OCI-LY7 (cell line): ENCODE measurements at regions of chr1 and their contacts with region 1.

Region 1: DNA sequence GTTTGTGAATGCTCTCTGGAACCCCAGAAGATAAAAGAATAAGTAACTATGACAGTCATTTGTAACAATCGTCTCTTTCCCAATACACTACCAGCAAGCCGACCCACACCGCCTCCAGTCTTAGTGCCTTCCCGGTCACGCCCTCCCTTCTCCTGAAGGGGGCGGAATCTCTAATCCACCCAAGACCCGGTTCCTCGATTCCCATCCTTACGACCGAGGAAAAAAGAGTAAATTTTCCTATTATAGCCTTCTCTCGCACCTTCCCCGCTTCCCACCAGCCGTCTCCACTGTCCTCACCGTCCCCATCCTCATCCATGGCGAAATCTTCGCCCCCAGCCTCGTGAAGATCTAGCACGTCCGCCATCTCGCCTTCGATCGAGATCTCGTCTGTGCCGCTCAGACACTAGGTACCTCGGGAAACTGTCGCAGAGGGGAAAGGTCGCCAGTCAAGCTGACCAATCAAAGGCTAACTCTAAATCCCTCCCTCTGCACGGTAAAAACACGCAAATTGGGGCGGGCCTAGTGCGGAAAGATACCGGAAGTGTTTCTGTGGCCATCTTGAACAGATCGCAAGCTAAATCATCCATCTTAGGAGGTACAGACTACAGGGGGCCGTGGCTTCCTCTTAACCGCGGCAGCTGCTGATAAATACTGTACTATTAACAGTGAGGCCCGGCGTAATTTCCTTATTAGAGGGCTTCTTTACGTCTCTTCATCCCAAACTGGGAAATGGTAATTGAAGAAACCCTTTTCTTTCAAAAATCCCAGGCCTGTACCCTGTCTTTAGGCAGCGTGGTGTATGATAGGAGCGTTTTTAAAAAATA is at the start of gene RBM8A:
- DNase-seq: peak; percentile 99
- H3K4me3 ChIP-seq: peak within 1 kb of the TSS; percentile 92
- H3K27ac ChIP-seq: peak within 1 kb of the TSS; percentile 91
- H3K4me1 ChIP-seq: peaks cover 25% of the 10 kb centered on the region
- CTCF ChIP-seq: peak; percentile 88
- total RNA-seq, gene RBM8A: 135 and 239 TPM in 2 replicates

Region 2: DNA sequence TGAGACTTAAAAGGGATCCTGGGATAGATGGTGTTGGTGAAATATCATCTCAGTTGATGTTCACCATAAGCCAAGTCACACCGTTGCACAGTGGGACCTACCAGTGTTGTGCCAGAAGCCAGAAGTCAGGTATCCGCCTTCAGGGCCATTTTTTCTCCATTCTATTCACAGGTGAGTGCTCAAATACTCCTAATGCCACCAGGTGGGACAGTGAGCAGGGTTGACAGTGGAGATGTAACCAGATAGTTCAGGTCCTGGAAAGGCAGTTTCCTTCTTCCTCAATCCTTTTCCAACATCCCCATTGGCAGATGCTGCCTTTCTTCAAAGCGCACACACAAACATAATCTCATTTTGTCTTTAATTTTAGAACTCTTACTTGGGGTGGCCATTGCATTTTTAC is 196.4 kb before region 1 on chr1:
- CTCF ChIA-PET with region 1: no interaction called
- POLR2A ChIA-PET with region 1: no interaction called
- intact Hi-C with region 1: no loop called
- DNase-seq: no peak
- H3K4me3 ChIP-seq: no peak overlapping the region
- H3K27ac ChIP-seq: no peak overlapping the region
- H3K4me1 ChIP-seq: no peaks in the 10 kb centered on the region
- CTCF ChIP-seq: no peak

Region 3: DNA sequence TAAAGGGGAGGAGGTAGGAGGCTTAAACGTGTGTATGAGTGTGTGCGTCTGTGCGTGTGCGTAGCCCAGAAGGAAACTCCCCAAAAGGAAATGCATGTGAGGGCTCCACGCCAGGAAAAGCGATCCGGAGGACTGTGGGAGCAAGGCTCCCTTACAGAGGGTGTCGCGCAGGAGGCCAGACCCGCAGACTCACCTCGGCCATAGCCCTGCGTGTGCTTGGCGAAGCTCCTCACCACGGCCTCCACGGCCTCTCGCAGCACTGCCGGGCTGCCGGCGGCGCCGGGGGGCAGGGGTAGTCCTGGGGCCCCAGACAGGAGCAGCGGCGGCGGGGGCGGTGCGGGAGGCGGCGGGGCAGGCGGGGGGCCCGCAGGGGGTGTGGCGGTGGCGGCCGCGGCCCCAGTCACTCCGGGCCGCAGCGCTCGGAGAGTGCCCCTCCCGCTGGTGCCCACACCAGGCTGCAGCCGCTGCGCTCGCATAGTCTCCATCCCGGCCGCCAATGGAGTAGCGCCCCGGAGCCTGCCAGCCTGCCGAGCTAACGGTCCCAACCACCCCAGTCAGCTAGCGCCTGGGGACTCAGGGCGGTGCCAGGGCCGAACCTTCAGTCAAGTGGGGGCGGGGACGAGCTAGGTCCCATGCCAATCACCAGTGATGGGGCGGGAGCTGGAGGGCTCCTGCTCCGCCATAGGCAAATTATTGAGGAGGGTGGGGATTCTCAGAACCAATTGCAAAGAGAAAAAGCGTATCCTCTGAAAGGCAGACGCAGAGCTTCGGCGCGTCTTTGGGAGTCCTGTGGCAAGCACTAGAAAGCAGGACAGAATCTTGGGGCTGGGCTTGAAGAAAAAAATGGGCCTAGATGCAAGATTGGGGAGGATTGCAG is 30.4 kb after region 1 on chr1 and contains the start of gene LIX1L:
- CTCF ChIA-PET with region 1: interaction called, 3 read pairs
- POLR2A ChIA-PET with region 1: interaction called, 20 read pairs
- intact Hi-C with region 1: loop called (anchors 1 kb)
- DNase-seq: peak; percentile 98
- H3K4me3 ChIP-seq: peak within 1 kb of the TSS; percentile 86
- H3K27ac ChIP-seq: peak within 1 kb of the TSS; percentile 53
- H3K4me1 ChIP-seq: peaks cover 63% of the 10 kb centered on the region
- CTCF ChIP-seq: no peak
- total RNA-seq, gene LIX1L: 10.2 and 11.6 TPM in 2 replicates

Region 4: GRCh38 chr1:145963995-145964901 is 37.0 kb after region 1 on chr1 and contains the starts of genes ANKRD34A and POLR3GL:
- CTCF ChIA-PET with region 1: interaction called, 3 read pairs
- POLR2A ChIA-PET with region 1: interaction called, 20 read pairs
- intact Hi-C with region 1: loop called (anchors 1 kb)
- DNase-seq: peak; percentile 95
- H3K4me3 ChIP-seq: peak within 1 kb of the TSS; percentile 75
- H3K27ac ChIP-seq: peak within 1 kb of the TSS; percentile 36
- H3K4me1 ChIP-seq: peaks cover 53% of the 10 kb centered on the region
- CTCF ChIP-seq: no peak
- total RNA-seq, gene ANKRD34A: 0.62 and 1.9 TPM in 2 replicates
- total RNA-seq, gene POLR3GL: 19.8 and 29.8 TPM in 2 replicates